Esophagus muscularis mucosa (tissue), 4 donors: ENCODE measurements at regions of chr12 and their contacts with region 1.

Region 1: DNA sequence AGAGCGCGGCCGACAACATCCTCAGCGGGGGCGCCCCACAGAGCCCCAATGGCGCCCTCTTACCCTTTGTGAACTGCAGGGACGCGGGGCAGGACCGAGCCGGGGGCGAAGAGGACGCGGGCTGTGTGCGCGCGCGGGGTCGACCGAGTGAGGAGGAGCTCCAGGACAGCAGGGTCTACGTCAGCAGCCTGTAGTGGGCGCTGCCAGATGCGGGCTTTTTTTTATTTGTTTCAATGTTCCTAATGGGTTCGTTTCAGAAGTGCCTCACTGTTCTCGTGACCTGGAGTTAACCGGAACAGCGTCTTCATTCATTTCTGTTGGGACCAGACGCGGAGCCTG is 103.8 kb upstream of the FKBP4 start:
- DNase-seq: no peak
- H3K4me3 ChIP-seq: peak overlapping the region; percentile 36 to 39 (median 39)
- H3K27ac ChIP-seq: no peak overlapping the region
- H3K4me1 ChIP-seq: peaks cover 0 to 15% (median 6%) of the 10 kb centered on the region in 4 donors
- H3K27me3 ChIP-seq: peaks cover 0 to 3% (median 0%) of the 10 kb centered on the region in 4 donors
- CTCF ChIP-seq: no peak
- EP300 ChIP-seq: no peak
- POLR2A ChIP-seq: no peak

Region 2: DNA sequence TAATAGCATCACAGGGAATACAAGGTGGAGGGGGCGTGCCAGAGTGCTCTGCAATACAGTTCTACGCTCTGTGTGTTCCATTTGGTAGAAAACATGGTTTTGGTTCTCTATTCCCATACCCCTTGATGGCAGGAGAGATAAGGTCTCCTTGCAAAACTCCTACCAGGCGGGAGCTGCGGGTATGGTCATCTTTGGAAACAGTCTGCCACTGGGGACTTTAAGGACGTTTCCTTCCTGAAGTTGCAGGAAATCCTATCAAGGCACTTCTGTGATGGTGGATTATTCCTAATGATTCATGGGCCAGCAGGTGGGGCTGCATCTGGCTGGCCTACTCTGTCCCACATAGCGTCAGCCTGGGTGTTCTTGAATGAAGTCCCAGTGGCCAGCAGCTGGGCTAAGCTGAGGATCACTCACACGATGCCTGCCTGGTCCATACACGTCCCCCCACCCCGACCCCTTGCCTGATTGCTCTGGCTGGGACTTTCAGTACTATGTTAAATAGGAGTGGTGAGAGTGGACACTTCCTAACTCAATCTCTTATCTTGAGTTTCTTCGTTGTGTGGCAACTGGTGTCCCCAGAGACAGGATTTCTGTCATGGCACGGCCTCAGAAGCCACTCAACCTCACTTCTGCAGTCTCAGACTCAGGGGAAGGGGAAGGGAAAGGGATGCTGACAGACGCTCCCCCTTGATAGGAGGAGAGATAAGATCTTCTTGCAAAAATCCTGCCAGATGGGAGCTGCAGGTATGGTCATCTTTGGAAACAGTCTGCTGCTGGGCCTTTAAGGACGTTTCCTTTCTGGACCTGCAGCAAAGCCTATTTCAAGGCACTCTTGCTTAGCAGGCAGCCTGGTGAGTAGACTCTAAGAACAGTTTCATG is 42.7 kb after region 1 on chr12:
- intact Hi-C with region 1: no loop called
- DNase-seq: peak; percentile 45
- H3K4me3 ChIP-seq: no peak overlapping the region
- H3K27ac ChIP-seq: no peak overlapping the region
- H3K4me1 ChIP-seq: no peaks in the 10 kb centered on the region
- H3K27me3 ChIP-seq: peaks cover 0 to 42% (median 0%) of the 10 kb centered on the region in 4 donors
- CTCF ChIP-seq: no peak
- EP300 ChIP-seq: no peak
- POLR2A ChIP-seq: no peak

Region 3: DNA sequence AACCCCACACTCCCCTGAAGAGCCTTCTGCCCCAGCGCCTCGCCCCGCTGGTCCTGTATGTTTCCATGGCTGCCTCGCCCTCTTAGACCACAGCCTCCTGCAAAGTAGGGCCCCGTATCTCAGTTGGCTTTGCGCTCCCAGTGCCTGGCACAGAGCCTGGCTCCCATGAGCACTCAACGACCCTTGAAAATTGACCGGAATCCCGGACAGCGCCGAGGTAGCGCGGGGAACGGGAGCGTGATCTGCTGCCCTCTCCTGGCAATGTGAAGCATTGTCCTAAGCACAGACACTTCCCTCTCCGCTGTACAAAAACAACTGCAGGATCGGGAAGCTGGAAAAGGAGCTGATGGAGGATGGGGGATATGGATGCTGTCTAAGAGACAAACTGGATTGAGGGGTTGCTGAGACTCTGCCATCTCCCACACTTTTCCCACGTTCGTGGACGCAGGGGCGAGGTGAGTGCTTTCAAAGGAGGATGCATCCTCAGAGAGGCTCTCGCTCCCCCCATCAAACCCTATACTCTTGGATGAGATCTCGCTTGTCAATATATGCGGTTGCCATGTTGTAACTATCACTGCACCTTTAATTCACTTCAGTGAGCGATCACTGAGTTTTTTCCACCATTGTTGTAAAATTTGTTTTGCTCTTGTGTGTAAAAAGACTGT is 93.1 kb after region 1 on chr12:
- intact Hi-C with region 1: loop called (anchors 10 kb)
- DNase-seq: no peak
- H3K4me3 ChIP-seq: peak overlapping the region; percentile 22 to 49 (median 37)
- H3K27ac ChIP-seq: no peak overlapping the region
- H3K4me1 ChIP-seq: peaks cover 0 to 11% (median 10%) of the 10 kb centered on the region in 4 donors
- H3K27me3 ChIP-seq: peaks cover 0 to 19% (median 0%) of the 10 kb centered on the region in 4 donors
- CTCF ChIP-seq: peak; percentile 77 to 96 (median 78)
- EP300 ChIP-seq: no peak
- POLR2A ChIP-seq: no peak